ENCODE measurements at regions of chr10 and their contacts with region 1.

Region 1: GRCh38 chr10:96708456-96708855 is 11.9 kb downstream of the PIK3AP1 start:
- DNase-seq: peak; percentile 44
- H3K4me3 ChIP-seq: no peak overlapping the region
- H3K27ac ChIP-seq: peak overlapping the region; percentile 39
- H3K4me1 ChIP-seq: peaks cover 71% of the 10 kb centered on the region
- CTCF ChIP-seq: no peak

Region 2: DNA sequence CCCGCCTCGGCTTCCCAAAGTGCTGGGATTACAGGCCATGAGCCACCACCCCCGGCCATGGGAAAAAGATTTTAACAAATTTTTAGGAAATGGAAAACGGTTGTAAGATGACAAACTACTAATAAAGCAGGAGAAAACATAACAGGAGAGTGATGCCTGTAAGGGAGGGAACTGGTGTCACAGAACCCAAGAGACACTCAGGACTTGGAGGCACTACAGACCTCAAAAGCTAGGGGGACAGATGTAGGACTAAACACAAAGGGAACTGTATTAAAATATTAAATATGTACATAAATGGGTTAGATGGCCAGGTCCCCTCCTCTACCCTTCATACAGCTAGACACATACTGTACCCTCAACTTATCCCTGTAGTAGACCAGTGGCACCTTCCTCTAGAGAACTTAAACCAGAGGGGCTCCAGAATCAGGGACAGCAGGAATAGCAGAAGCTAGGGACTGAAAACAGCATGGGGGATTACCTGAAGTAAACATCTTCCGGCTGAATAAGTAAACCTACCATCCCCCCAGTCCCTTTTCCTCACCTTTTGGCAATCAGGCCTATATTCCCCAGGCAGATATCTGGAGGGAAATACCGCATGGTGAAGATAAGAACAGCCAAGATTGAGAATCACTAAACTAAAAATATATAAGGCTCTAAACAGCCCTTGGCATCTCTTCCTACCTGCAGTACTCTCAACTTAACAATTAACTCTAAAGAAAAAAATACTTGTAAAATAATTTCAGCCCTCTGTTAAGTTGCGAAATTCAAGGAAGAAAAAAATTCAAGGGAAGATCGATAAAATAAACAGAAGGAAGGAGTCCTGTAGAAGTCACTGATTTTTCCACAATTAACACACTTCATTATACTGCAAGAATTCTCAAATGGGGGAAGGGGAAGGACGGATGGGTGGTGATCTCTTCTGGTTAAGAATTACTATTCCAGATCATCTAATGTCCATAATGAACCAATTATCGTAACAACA is 137.2 kb before region 1 on chr10:
- CTCF ChIA-PET with region 1: no interaction called
- POLR2A ChIA-PET with region 1: no interaction called
- intact Hi-C with region 1: no loop called
- DNase-seq: no peak
- H3K4me3 ChIP-seq: no peak overlapping the region
- H3K27ac ChIP-seq: no peak overlapping the region
- H3K4me1 ChIP-seq: peaks cover under 1% of the 10 kb centered on the region
- CTCF ChIP-seq: no peak

Region 3: GRCh38 chr10:96673318-96674099 is 34.9 kb before region 1 on chr10:
- CTCF ChIA-PET with region 1: no interaction called
- POLR2A ChIA-PET with region 1: interaction called, 12 read pairs
- intact Hi-C with region 1: no loop called
- DNase-seq: peak; percentile 87
- H3K4me3 ChIP-seq: peak overlapping the region; percentile 62
- H3K27ac ChIP-seq: peak overlapping the region; percentile 96
- H3K4me1 ChIP-seq: peaks cover 88% of the 10 kb centered on the region
- CTCF ChIP-seq: no peak